ENCODE measurements at regions of chr21 and their contacts with region 1.

Region 1: GRCh38 chr21:29002442-29003144 is 9.9 kb upstream of the LTN1 start:
- DNase-seq: peak; percentile 92 to 98 (median 93)
- H3K4me3 ChIP-seq: peak overlapping the region; percentile 83
- H3K4me3 Mint-ChIP-seq: peak overlapping the region; percentile 91 to 95 (median 93)
- H3K27ac ChIP-seq: peak overlapping the region; percentile 98
- H3K27ac Mint-ChIP-seq: peak overlapping the region; percentile 96 to 99 (median 98)
- H3K4me1 ChIP-seq: no peaks in the 10 kb centered on the region
- H3K4me1 Mint-ChIP-seq: peaks cover 9 to 13% (median 11%) of the 10 kb centered on the region in 3 donors
- H3K27me3 ChIP-seq: no peaks in the 10 kb centered on the region
- H3K27me3 Mint-ChIP-seq: no peaks in the 10 kb centered on the region

Region 2: GRCh38 chr21:29018540-29018939 is 15.9 kb after region 1 on chr21:
- CTCF ChIA-PET with region 1: interaction called, 15 read pairs
- POLR2A ChIA-PET with region 1: interaction called, 108 read pairs
- DNase-seq: no peak
- H3K4me3 ChIP-seq: peak overlapping the region; percentile 89
- H3K4me3 Mint-ChIP-seq: peak overlapping the region; percentile 74 to 90 (median 88)
- H3K27ac ChIP-seq: peak overlapping the region; percentile 92
- H3K27ac Mint-ChIP-seq: peak overlapping the region; percentile 36 to 97 (median 86)
- H3K4me1 ChIP-seq: peaks cover 34% of the 10 kb centered on the region
- H3K4me1 Mint-ChIP-seq: peaks cover 32 to 59% (median 42%) of the 10 kb centered on the region in 3 donors
- H3K27me3 ChIP-seq: no peaks in the 10 kb centered on the region
- H3K27me3 Mint-ChIP-seq: peaks cover 0 to 3% of the 10 kb centered on the region in 2 donors

Region 3: GRCh38 chr21:29024474-29025327 is 22.1 kb after region 1 on chr21 and contains the start of gene USP16:
- CTCF ChIA-PET with region 1: interaction called, 15 read pairs
- POLR2A ChIA-PET with region 1: interaction called, 108 read pairs
- DNase-seq: peak; percentile 89 to 97 (median 96)
- H3K4me3 ChIP-seq: peak within 1 kb of the TSS; percentile 94
- H3K4me3 Mint-ChIP-seq: peak within 1 kb of the TSS; percentile 91 to 99 (median 97)
- H3K27ac ChIP-seq: peak within 1 kb of the TSS; percentile 99
- H3K27ac Mint-ChIP-seq: peak within 1 kb of the TSS; percentile 97 to 100 (median 99)
- H3K4me1 ChIP-seq: peaks cover 54% of the 10 kb centered on the region
- H3K4me1 Mint-ChIP-seq: peaks cover 50 to 73% (median 72%) of the 10 kb centered on the region in 3 donors
- H3K27me3 ChIP-seq: no peaks in the 10 kb centered on the region
- H3K27me3 Mint-ChIP-seq: peaks cover 0 to 3% of the 10 kb centered on the region in 2 donors
- total RNA-seq, gene USP16: 55.7 to 55.9 TPM

Region 4: GRCh38 chr21:29073222-29074006 is 70.8 kb after region 1 on chr21 and contains the start of gene CCT8:
- CTCF ChIA-PET with region 1: interaction called, 3 read pairs
- POLR2A ChIA-PET with region 1: interaction called, 15 read pairs
- DNase-seq: peak; percentile 97 to 100 (median 98)
- H3K4me3 ChIP-seq: peak within 1 kb of the TSS; percentile 93
- H3K4me3 Mint-ChIP-seq: peak within 1 kb of the TSS; percentile 96 to 100 (median 99)
- H3K27ac ChIP-seq: peak within 1 kb of the TSS; percentile 95
- H3K27ac Mint-ChIP-seq: peak within 1 kb of the TSS; percentile 96 to 100 (median 99)
- H3K4me1 ChIP-seq: peaks cover 36% of the 10 kb centered on the region
- H3K4me1 Mint-ChIP-seq: peaks cover 47 to 85% (median 79%) of the 10 kb centered on the region in 3 donors
- H3K27me3 ChIP-seq: no peaks in the 10 kb centered on the region
- H3K27me3 Mint-ChIP-seq: peaks cover 0 to 1% of the 10 kb centered on the region in 2 donors
- total RNA-seq, gene CCT8: 401 to 415 TPM

Measured in CD8-positive, alpha-beta memory T cell (primary cell).